ENCODE measurements at regions of chr12 and their contacts with region 1.

Region 1: DNA sequence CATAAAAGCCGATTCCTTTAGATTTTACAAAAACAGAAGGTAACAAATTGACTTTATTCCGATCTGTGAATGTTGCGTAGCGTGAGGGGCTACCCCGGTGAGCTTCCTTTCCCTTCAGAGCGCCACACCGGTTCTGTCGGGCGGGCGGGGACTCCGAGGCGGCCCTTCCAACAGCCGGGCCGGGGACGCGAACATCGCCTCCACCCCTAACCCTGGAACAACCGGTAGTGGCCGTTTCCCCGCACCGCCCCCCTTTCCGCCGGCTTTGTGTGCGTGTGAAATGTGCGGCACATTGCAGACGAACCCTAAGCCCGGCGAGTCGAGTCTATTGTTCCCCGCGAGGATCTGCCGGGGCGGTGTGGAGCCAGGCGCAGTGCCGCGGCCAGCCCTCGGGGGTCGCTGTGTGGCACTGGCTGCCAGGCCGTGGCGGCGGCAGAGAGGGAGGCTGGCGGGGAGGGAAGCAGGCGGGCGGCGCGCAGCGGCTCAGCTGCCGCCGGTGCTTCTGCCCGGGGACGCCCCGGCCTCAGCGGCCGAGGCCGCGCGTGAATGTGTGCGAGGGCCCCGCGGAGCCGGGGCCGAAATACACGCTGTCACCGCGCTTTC is 775 bp upstream of the ARID2 start:
- DNase-seq: peak; percentile 66 to 97
- ATAC-seq: peak; percentile 62 to 79
- H3K4me3 ChIP-seq: peak overlapping the region; percentile 62
- H3K27ac ChIP-seq: peak overlapping the region; percentile 98 to 99
- H3K4me1 ChIP-seq: peaks cover 41% of the 10 kb centered on the region; the same call in 2 of the 3 replicates
- CTCF ChIP-seq: peak; percentile 72
- EP300 ChIP-seq: no peak
- POLR2A ChIP-seq: peak; percentile 84
- RAD21 ChIP-seq: peak; percentile 11 to 43; a peak in 2 of 5 replicates

Region 2: GRCh38 chr12:45060976-45061375 is 667.8 kb before region 1 on chr12:
- CTCF ChIA-PET with region 1: no interaction called
- POLR2A ChIA-PET with region 1: no interaction called
- DNase-seq: no peak
- ATAC-seq: no peak
- H3K4me3 ChIP-seq: no peak overlapping the region
- H3K27ac ChIP-seq: no peak overlapping the region
- H3K4me1 ChIP-seq: no peaks in the 10 kb centered on the region
- CTCF ChIP-seq: no peak
- EP300 ChIP-seq: no peak
- POLR2A ChIP-seq: no peak
- RAD21 ChIP-seq: no peak

Region 3: GRCh38 chr12:45543906-45544315 is 184.8 kb before region 1 on chr12:
- CTCF ChIA-PET with region 1: interaction called, 36 read pairs
- POLR2A ChIA-PET with region 1: interaction called, 12 read pairs
- DNase-seq: peak; percentile 62 to 78
- ATAC-seq: peak; percentile 78 to 96
- H3K4me3 ChIP-seq: no peak overlapping the region
- H3K27ac ChIP-seq: no peak overlapping the region
- H3K4me1 ChIP-seq: no peaks in the 10 kb centered on the region
- CTCF ChIP-seq: peak; percentile 79
- EP300 ChIP-seq: no peak
- POLR2A ChIP-seq: no peak
- RAD21 ChIP-seq: peak; percentile 75 to 78

Region 4: DNA sequence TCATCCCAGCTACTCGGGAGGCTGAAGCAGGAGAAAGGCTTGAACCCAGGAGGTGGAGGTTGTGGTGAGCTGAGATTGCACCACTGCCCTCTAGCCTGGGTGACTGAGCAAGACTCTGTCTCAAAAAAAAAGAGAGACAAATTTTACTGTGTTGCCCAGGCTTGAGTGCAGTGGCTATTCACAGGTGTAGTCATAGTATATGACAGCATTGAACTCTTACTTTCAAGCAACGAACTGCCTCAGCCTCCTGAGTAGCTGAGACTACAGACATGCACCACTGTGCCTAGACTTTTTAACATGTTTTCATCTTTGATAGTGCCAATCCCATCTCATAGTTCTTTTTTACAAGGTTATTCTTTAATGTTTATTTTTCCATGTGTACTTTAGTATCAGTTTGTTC is 14.5 kb after region 1 on chr12:
- CTCF ChIA-PET with region 1: interaction called, 15 read pairs
- POLR2A ChIA-PET with region 1: no interaction called
- DNase-seq: no peak
- ATAC-seq: no peak
- H3K4me3 ChIP-seq: no peak overlapping the region
- H3K27ac ChIP-seq: no peak overlapping the region
- H3K4me1 ChIP-seq: no peaks in the 10 kb centered on the region
- CTCF ChIP-seq: no peak
- EP300 ChIP-seq: no peak
- POLR2A ChIP-seq: no peak
- RAD21 ChIP-seq: no peak

Region 5: DNA sequence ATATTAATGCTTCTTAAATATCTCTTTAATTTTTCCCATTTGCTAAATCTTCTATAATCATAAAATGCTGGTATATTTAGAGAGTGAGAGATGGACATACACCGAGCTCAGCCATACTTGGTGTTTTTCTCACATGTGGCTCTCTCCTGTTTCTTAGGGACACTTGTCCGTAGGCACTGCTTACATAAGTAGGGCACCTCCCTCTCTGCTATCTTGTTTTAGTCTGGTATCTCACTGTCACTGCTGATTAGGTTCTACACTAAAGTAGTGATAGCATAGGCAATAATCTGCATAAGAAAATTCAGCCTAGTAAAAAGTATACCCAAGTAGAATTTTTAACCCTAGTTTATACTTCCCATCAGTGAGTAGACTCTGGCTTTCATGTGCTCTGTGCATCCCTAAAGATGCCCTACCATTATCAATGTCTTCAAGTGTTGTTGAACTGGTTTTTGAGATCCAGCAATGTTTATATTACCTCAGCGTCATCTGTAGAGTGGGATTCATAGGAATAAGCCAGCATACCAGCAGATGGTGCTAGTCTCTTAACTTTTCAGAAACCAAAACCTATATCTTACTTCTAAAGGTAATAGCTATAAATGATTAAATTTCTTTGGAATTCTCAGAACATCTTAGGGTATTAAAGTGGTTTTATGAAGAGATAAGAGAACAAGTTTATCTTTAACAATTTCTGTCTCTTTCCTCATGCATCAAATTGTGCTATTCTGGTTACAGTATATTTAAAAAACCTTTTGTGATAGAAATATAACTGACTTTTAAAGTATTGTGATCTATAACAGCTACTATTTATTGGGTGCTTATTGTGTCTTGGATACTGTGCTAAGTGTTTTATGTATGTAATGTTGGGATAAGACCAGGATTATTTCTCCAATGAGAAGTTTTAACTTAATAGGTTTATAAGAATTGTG is 33.7 kb after region 1 on chr12:
- CTCF ChIA-PET with region 1: no interaction called
- POLR2A ChIA-PET with region 1: no interaction called
- DNase-seq: peak; percentile 26 to 62
- ATAC-seq: peak; percentile 85 to 92
- H3K4me3 ChIP-seq: no peak overlapping the region
- H3K27ac ChIP-seq: no peak overlapping the region
- H3K4me1 ChIP-seq: peaks cover 12% of the 10 kb centered on the region; the same call in 2 of the 3 replicates
- CTCF ChIP-seq: peak; percentile 74
- EP300 ChIP-seq: no peak
- POLR2A ChIP-seq: no peak
- RAD21 ChIP-seq: peak; percentile 66 to 74

Region 6: DNA sequence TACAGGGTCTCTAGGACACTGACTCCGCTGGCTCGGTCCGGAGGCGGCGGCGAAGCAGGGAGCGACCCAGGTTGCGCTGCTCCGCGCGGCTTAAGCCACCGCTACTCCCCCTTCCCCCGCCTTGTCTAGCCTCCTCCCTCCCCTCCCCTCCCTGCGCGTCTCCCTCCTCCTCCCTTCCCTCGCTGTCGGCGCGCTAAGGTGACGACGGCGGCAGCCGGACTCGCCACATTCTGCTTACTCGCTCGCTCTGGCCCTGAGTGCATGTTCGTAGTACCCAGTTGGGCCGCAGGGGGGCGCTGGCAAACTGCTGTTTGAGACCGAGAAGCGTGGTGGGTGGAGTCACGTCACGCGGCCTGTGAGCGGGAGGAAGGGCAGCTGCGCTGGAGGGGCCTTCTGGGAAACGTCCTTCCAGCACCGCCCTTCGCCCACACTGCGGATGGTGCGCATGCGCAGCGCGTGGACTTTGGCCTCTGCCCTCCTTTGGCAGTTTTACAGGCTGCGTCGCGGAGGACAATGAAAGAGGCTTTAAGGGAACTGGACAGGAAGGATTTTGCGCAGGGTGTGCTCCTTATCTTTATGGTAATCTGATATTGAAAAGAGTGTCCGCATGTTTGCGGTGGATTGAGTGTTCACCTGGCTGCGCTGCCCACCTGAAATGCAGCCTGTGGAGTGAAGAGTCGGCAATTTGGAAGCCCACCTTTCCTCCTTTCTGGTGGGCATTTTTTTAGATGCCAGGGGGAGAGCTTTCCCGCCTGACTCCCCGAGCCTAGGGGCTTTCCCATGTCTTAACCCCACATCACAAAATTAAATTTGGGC is 261.9 kb after region 1 on chr12 and contains the start of gene SCAF11:
- CTCF ChIA-PET with region 1: interaction called, 3 read pairs
- POLR2A ChIA-PET with region 1: interaction called, 11 read pairs
- DNase-seq: peak; percentile 91 to 100
- ATAC-seq: peak; percentile 85 to 91
- H3K4me3 ChIP-seq: peak within 1 kb of the TSS; percentile 69
- H3K27ac ChIP-seq: peak within 1 kb of the TSS; percentile 94 to 97
- H3K4me1 ChIP-seq: peaks cover 31% of the 10 kb centered on the region
- CTCF ChIP-seq: peak; percentile 84
- EP300 ChIP-seq: peak in 1 of 2 experiments; percentile 10; a peak in 1 of 5 replicates
- POLR2A ChIP-seq: peak; percentile 92
- RAD21 ChIP-seq: peak; percentile 89 to 95
- polyA plus RNA-seq, gene SCAF11: 64.2 and 110 TPM in 2 replicates